HCT116 (cell line): ENCODE measurements at regions of chr5 and their contacts with region 1.

Region 1: DNA sequence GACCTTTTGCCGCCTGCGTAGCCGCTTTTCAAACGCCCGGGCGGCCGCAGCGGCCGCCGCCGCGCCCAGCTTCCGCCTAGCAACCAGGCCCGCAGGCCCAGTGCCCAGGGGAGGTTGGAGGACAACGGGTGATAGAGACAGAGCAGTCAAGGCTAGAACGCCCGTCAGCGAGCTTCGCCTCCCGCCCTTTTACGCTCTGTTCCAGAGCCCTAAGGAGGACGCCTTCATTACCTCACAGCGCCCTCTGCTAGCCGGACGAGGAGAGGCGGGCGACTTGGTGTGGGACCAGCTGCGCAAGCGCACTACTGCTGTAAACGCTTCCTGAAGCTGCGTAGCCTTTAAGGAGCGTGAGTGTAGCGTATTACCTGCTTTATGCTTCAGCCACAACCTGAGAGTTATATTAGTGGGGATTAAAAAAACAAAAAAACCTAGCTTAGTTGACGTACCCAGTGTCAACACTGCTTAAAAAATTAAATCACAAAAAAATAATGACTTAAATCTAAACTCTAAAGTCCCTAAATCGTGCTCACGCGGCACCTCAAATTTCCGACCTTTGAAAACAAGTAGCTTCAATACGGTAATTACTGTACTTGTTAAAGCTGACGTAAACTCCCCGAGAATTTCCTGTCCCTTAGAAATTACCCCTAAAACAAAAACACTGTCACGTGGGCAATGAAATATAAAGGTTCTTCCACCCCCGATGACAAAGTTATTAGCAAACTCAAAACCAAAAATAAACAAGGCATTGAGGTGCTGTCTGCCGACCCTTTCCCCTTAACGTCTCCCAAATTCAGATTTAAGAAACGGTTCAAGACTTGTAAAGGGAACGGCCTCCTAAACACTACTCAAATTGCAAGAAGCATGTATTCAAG is at the start of gene CEP120:
- DNase-seq: peak; percentile 99
- ATAC-seq: peak; percentile 98
- H3K4me3 ChIP-seq: peak within 1 kb of the TSS; percentile 89 to 93
- H3K27ac ChIP-seq: peak within 1 kb of the TSS; percentile 53
- H3K4me1 ChIP-seq: peaks cover 4 to 16% of the 10 kb centered on the region in 2 experiments; a peak in 3 of 4 replicates
- H3K27me3 ChIP-seq: no peaks in the 10 kb centered on the region
- CTCF ChIP-seq: peak; percentile 60 to 76 (median 71)
- POLR2A ChIP-seq: peak; percentile 80
- RAD21 ChIP-seq: peak; percentile 69
- total RNA-seq, gene CEP120: 30.2 TPM

Region 2: DNA sequence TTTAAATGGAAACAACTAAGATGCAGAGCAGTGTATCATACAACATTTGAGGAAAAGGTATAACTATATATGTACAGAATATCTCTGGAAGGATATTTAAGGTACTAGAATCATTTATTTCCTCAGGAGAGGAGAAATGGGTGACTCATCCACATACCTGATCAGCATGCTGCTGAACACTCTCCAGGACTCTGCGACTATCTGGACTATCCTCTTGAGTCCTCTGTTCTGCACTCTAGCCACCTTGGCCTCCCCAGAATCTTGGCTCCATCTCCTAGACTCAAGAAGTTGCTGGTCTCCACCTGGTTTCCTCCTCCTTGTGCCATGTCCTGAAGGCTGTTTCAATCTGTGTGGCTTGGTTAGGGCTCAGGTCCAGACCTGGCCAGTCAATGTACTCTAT is 343.3 kb before region 1 on chr5:
- CTCF ChIA-PET with region 1: no interaction called
- POLR2A ChIA-PET with region 1: no interaction called
- RAD21 ChIA-PET with region 1: no interaction called
- intact Hi-C with region 1: no loop called
- DNase-seq: no peak
- ATAC-seq: no peak
- H3K4me3 ChIP-seq: no peak overlapping the region
- H3K27ac ChIP-seq: no peak overlapping the region
- H3K4me1 ChIP-seq: 0 out of 4 replicates have a peak, but pooled peaks cover 0 to 3% of the 10 kb centered on the region in 2 experiments
- H3K27me3 ChIP-seq: no peaks in the 10 kb centered on the region; the same call in 1 of the 2 replicates
- CTCF ChIP-seq: no peak
- POLR2A ChIP-seq: no peak
- RAD21 ChIP-seq: no peak

Region 3: GRCh38 chr5:123119334-123119986 is 304.1 kb before region 1 on chr5:
- CTCF ChIA-PET with region 1: interaction called, 10 read pairs
- POLR2A ChIA-PET with region 1: no interaction called
- RAD21 ChIA-PET with region 1: no interaction called
- intact Hi-C with region 1: no loop called
- DNase-seq: peak; percentile 10
- ATAC-seq: peak; percentile 87
- H3K4me3 ChIP-seq: no peak overlapping the region
- H3K27ac ChIP-seq: no peak overlapping the region
- H3K4me1 ChIP-seq: peaks cover 4 to 12% of the 10 kb centered on the region in 2 experiments; a peak in 3 of 4 replicates
- H3K27me3 ChIP-seq: no peaks in the 10 kb centered on the region
- CTCF ChIP-seq: peak; percentile 17 to 37 (median 28); a peak in 3 of 6 replicates
- POLR2A ChIP-seq: no peak
- RAD21 ChIP-seq: peak; percentile 38; the same call in 1 of the 2 replicates

Region 4: DNA sequence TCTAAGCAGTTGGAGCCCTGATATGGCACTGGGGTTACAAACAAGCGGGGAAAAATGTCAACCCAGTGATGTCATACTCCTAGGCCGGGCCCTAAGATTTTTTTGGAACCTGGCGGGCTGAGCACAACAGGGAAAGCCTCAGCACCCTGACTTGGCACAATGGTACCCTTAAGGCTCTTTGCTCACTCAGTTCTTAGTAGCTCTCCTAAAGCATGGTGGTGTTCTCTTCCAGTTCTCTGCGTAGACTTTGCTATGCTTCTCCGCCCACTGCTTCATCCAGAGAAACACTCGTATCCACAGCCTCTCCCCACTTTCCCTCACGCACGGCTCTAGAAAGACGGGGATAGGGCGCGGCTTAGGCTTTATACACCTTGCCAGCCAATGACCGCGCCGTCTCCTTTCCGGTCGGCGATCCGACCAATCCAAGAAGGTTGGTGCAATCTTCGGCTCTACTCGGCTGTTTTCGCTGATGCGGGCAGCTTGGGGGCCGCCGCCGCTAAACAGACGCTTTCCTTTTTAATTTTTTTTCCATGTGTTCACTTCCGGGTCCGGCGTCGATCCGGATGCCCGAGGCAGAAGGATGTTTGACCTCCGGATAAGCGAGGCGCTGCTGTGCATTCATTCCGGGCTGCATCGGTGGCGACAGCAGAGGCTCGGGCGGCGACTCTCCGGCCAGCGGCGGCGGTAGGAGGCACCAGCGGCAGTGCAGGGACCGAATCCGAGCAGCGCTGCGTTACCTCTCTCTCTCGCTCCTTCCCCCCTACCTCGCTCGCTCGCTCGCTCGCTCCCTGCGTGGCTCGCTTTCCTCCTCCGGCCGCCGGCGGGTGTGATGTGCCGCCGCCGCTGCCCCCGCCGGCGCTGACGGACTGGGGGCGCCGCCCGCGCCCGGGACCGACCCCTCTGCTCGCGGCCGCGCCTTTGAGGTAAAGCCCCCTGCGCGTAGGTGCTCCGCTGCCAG is 88.4 kb after region 1 on chr5 and contains the start of gene CSNK1G3:
- CTCF ChIA-PET with region 1: interaction called, 5 read pairs
- POLR2A ChIA-PET with region 1: interaction called, 13 read pairs
- RAD21 ChIA-PET with region 1: no interaction called
- intact Hi-C with region 1: loop called (anchors 1 kb)
- DNase-seq: peak; percentile 96
- ATAC-seq: peak; percentile 96
- H3K4me3 ChIP-seq: peak within 1 kb of the TSS; percentile 77 to 86
- H3K27ac ChIP-seq: peak within 1 kb of the TSS; percentile 86
- H3K4me1 ChIP-seq: peaks cover 9 to 24% of the 10 kb centered on the region in 2 experiments; a peak in 3 of 4 replicates
- H3K27me3 ChIP-seq: no peaks in the 10 kb centered on the region
- CTCF ChIP-seq: no peak
- POLR2A ChIP-seq: peak; percentile 98
- RAD21 ChIP-seq: 0 out of 2 replicates have a peak, but pooled peaks have one; percentile 0
- total RNA-seq, gene CSNK1G3: 51.1 TPM